Gastrocnemius medialis (tissue), 4 donors: ENCODE measurements at regions of chr3 and their contacts with region 1.

Region 1: GRCh38 chr3:79019137-79019923 is 748.5 kb downstream of the ROBO1 start:
- DNase-seq: peak; percentile 54 to 70
- ATAC-seq: peak; percentile 77 to 82
- H3K4me3 ChIP-seq: peak overlapping the region; percentile 55 to 94 (median 67)
- H3K27ac ChIP-seq: peak overlapping the region; percentile 73 to 84 (median 81)
- H3K4me1 ChIP-seq: peaks cover 0 to 16% of the 10 kb centered on the region in 2 donors
- H3K27me3 ChIP-seq: peaks cover 0 to 3% (median 0%) of the 10 kb centered on the region in 3 donors
- CTCF ChIP-seq: no peak
- POLR2A ChIP-seq: peak; percentile 56 to 69

Region 2: GRCh38 chr3:78872195-78872594 is 147.1 kb before region 1 on chr3:
- in situ Hi-C with region 1: no loop called
- intact Hi-C with region 1: no loop called
- DNase-seq: no peak
- ATAC-seq: no peak
- H3K4me3 ChIP-seq: no peak overlapping the region
- H3K27ac ChIP-seq: no peak overlapping the region
- H3K4me1 ChIP-seq: no peaks in the 10 kb centered on the region
- H3K27me3 ChIP-seq: no peaks in the 10 kb centered on the region
- CTCF ChIP-seq: no peak
- POLR2A ChIP-seq: no peak

Region 3: GRCh38 chr3:78974181-78974790 is 45.0 kb before region 1 on chr3:
- in situ Hi-C with region 1: no loop called
- intact Hi-C with region 1: loop called (anchors 5 kb)
- DNase-seq: no peak
- ATAC-seq: peak in 1 of 2 donors; percentile 31
- H3K4me3 ChIP-seq: peak overlapping the region in 1 of 4 donors; percentile 20
- H3K27ac ChIP-seq: no peak overlapping the region
- H3K4me1 ChIP-seq: peaks cover 3 to 8% of the 10 kb centered on the region in 2 donors
- H3K27me3 ChIP-seq: no peaks in the 10 kb centered on the region
- CTCF ChIP-seq: no peak
- POLR2A ChIP-seq: no peak